Head of caudate nucleus (tissue), 42 donors: ENCODE measurements at regions of chr22 and their contacts with region 1.

Region 1: DNA sequence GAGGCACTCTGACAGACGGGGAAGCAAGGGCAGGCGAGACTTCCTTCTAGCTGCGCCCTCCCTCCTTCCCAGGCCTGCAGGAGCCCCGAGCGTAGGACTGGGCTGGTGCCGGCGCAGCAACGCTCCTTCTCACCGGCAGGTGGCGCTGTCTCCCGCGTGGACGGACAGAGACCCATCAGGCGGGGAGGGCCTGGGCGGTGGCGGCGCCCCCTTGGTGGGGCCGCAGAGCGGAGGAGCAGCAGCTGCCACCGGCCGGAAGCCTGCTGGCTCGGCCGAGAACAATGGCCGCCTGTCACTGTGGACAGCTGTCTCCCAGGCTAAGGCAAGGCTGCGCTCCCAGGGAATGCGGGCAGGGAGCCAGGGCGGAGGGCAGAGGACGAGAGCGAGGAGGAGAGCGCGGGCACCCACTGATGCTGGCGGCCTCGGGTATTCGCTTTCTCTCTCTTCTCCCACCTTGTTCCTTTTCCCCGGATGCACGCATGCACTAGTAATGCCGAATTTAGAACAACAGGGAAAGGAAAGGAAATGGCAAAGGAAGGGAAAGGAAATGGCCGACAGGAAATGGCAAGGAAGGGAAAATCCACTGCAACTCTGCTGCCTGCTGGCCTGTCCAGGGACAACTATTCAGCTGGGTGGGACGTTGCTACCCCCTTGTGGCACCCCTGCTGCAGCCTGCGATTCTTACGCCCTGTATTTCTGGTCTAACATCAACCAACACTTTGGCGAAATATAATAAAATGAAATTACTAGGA is 14.4 kb downstream of the PPM1F start:
- DNase-seq: peak; percentile 85 to 99 (median 96)

Region 2: GRCh38 chr22:21698430-21699329 is 239.6 kb before region 1 on chr22:
- intact Hi-C with region 1: no loop called
- DNase-seq: no peak

Region 3: GRCh38 chr22:21712894-21713712 is 225.1 kb before region 1 on chr22:
- intact Hi-C with region 1: loop called (anchors 5 kb)
- DNase-seq: peak; percentile 49 to 91 (median 80)

Region 4: GRCh38 chr22:21735200-21736076 is 202.8 kb before region 1 on chr22 and contains the start of gene YPEL1:
- intact Hi-C with region 1: loop called (anchors 5 kb)
- DNase-seq: peak; percentile 88 to 99 (median 98)

Region 5: GRCh38 chr22:21867528-21868266 is 70.5 kb before region 1 on chr22 and contains the start of gene MAPK1:
- intact Hi-C with region 1: loop called (anchors 5 kb)
- DNase-seq: peak; percentile 92 to 99 (median 97)

Region 6: GRCh38 chr22:21952586-21953571 is 14.6 kb after region 1 on chr22 and contains the start of gene PPM1F:
- intact Hi-C with region 1: loop called (anchors 2 kb)
- DNase-seq: peak; percentile 52 to 95 (median 86)